Caco-2 (cell line): ENCODE measurements at regions of chr18 and their contacts with region 1.

Region 1: GRCh38 chr18:10081492-10081891 is 167.7 kb downstream of the VAPA start:
- DNase-seq: no peak
- H3K4me3 ChIP-seq: no peak overlapping the region
- H3K4me3 Mint-ChIP-seq: no peak overlapping the region
- H3K27ac Mint-ChIP-seq: no peak overlapping the region
- H3K4me1 ChIP-seq: no peaks in the 10 kb centered on the region; the same call in 1 of the 2 replicates
- H3K4me1 Mint-ChIP-seq: peaks cover 14% of the 10 kb centered on the region
- H3K27me3 ChIP-seq: no peaks in the 10 kb centered on the region
- H3K27me3 Mint-ChIP-seq: no peaks in the 10 kb centered on the region
- CTCF ChIP-seq: no peak

Region 2: GRCh38 chr18:10140461-10141282 is 59.2 kb after region 1 on chr18:
- CTCF ChIA-PET with region 1: no interaction called
- POLR2A ChIA-PET with region 1: no interaction called
- intact Hi-C with region 1: loop called (anchors 10 kb)
- DNase-seq: peak; percentile 74 to 82
- H3K4me3 ChIP-seq: no peak overlapping the region
- H3K4me3 Mint-ChIP-seq: peak overlapping the region; percentile 35
- H3K27ac Mint-ChIP-seq: peak overlapping the region; percentile 83
- H3K4me1 ChIP-seq: peaks cover 26% of the 10 kb centered on the region
- H3K4me1 Mint-ChIP-seq: peaks cover 30% of the 10 kb centered on the region
- H3K27me3 ChIP-seq: no peaks in the 10 kb centered on the region
- H3K27me3 Mint-ChIP-seq: no peaks in the 10 kb centered on the region
- CTCF ChIP-seq: no peak

Region 3: DNA sequence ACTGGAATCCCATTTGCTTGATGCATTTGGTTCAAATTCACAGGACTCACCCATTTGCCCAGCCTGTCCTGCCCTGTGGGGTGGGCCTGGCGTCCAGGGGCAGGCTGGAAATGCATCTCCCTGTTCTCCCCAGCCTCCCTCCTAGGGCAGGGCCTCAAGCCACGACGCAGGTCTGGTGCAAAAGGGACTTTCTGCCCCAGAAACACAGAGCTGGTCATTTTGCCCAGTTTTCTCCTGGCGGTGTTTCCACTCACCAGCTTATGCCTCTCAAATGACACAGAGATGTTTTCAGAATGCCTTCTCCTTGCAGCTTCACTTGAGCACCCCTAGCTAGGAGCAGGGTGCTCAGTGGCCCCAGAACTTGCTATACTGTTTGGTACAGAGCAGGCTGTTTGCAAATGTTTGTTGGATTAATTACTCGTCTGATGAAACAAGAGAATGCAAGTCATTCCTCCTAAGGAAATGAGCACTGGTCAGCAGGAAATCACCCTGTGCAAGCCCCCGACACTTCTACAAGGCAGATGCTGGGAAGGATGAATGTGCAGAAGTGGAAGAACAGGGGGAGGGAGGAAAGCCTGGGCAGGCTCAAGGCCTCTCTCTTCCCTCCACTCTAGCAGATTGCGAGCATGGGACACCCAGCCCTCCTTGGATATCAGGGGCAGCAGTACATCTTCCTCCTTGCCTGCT is 208.6 kb after region 1 on chr18:
- CTCF ChIA-PET with region 1: no interaction called
- POLR2A ChIA-PET with region 1: no interaction called
- intact Hi-C with region 1: no loop called
- DNase-seq: no peak
- H3K4me3 ChIP-seq: no peak overlapping the region
- H3K4me3 Mint-ChIP-seq: no peak overlapping the region
- H3K27ac Mint-ChIP-seq: no peak overlapping the region
- H3K4me1 ChIP-seq: no peaks in the 10 kb centered on the region
- H3K4me1 Mint-ChIP-seq: peaks cover 8% of the 10 kb centered on the region
- H3K27me3 ChIP-seq: no peaks in the 10 kb centered on the region
- H3K27me3 Mint-ChIP-seq: no peaks in the 10 kb centered on the region
- CTCF ChIP-seq: no peak